Naive thymus-derived CD4-positive, alpha-beta T cell (primary cell): ENCODE measurements at regions of chr5 and their contacts with region 1.

Region 1: GRCh38 chr5:115296124-115297022 is at the start of gene CCDC112:
- DNase-seq: peak; percentile 49 to 71 (median 67)
- ATAC-seq: peak; percentile 83
- H3K4me3 ChIP-seq: peak within 1 kb of the TSS; percentile 56
- H3K4me3 Mint-ChIP-seq: peak within 1 kb of the TSS; percentile 77 to 92 (median 89)
- H3K27ac ChIP-seq: peak within 1 kb of the TSS; percentile 47
- H3K27ac Mint-ChIP-seq: peak within 1 kb of the TSS in 8 of 9 donors; percentile 29 to 80 (median 69)
- H3K4me1 ChIP-seq: peaks cover 8 to 10% of the 10 kb centered on the region in 2 donors
- H3K4me1 Mint-ChIP-seq: peaks cover 5 to 18% (median 13%) of the 10 kb centered on the region in 7 donors
- H3K27me3 ChIP-seq: no peaks in the 10 kb centered on the region
- H3K27me3 Mint-ChIP-seq: peaks cover 0 to 69% (median 3%) of the 10 kb centered on the region in 5 donors
- total RNA-seq, gene CCDC112: 0.51 to 8.5 (median 3.9) TPM

Region 2: GRCh38 chr5:113520429-113520828 is 1775.9 kb before region 1 on chr5:
- CTCF ChIA-PET with region 1: no interaction called
- POLR2A ChIA-PET with region 1: no interaction called
- intact Hi-C with region 1: loop called in 1 of 2 experiments (anchors 5 kb)
- DNase-seq: no peak
- ATAC-seq: no peak
- H3K4me3 ChIP-seq: no peak overlapping the region
- H3K4me3 Mint-ChIP-seq: peak overlapping the region in 2 of 10 donors; percentile 13 to 51
- H3K27ac ChIP-seq: no peak overlapping the region
- H3K27ac Mint-ChIP-seq: peak overlapping the region in 2 of 9 donors; percentile 24 to 56
- H3K4me1 ChIP-seq: peaks cover 7 to 15% of the 10 kb centered on the region in 2 donors
- H3K4me1 Mint-ChIP-seq: peaks cover 30 to 86% (median 73%) of the 10 kb centered on the region in 7 donors
- H3K27me3 ChIP-seq: no peaks in the 10 kb centered on the region
- H3K27me3 Mint-ChIP-seq: no peaks in the 10 kb centered on the region

Region 3: DNA sequence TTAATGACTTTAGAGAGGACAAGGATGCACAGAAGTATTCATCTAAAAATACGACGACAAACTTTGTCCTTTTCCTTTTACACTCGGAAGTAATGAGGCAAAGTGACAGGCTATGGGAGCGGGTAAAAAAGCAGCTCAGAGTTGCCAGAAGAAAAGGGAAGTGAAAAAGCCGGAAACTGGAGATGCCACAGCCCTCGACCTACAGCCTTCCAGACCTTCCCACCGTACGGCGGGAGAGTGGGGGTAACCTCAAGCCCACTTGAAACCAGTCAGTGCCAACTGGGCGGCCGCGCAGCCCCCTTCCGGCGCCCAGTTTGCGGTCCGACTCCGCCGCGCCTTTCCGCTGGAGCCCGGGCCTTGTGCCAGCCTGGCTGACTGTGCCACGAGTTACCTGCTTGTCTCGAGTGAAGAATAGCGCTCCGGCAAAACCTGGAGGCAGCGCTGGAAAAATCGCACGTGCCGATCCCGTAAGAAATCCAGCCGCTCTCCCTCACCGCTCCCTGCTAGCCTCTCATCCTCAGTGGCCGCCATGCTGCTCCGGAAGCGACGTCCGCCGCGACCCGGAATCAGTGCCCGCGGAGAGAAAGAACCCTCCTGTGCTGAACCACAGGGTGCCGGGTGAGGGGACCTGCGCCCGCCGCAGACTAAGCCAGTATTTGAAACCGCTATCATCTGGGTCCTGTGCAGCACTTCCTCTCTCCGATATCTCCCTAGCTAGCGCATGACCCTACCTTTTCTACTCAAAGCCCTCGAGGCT is 33.9 kb before region 1 on chr5 and contains the start of gene PGGT1B:
- CTCF ChIA-PET with region 1: no interaction called
- POLR2A ChIA-PET with region 1: interaction called, 26 read pairs
- intact Hi-C with region 1: loop called (anchors 1 to 2 kb)
- DNase-seq: peak; percentile 45 to 69 (median 64)
- ATAC-seq: peak; percentile 94
- H3K4me3 ChIP-seq: peak within 1 kb of the TSS; percentile 94
- H3K4me3 Mint-ChIP-seq: peak within 1 kb of the TSS; percentile 91 to 100 (median 96)
- H3K27ac ChIP-seq: peak within 1 kb of the TSS; percentile 76
- H3K27ac Mint-ChIP-seq: peak within 1 kb of the TSS; percentile 83 to 96 (median 94)
- H3K4me1 ChIP-seq: peaks cover 15 to 23% of the 10 kb centered on the region in 2 donors
- H3K4me1 Mint-ChIP-seq: peaks cover 33 to 59% (median 43%) of the 10 kb centered on the region in 7 donors
- H3K27me3 ChIP-seq: no peaks in the 10 kb centered on the region
- H3K27me3 Mint-ChIP-seq: peaks cover 0 to 4% (median 0%) of the 10 kb centered on the region in 5 donors
- total RNA-seq, gene PGGT1B: 34.5 to 49.1 (median 41.5) TPM

Region 4: GRCh38 chr5:115317736-115318135 is 21.4 kb after region 1 on chr5:
- CTCF ChIA-PET with region 1: no interaction called
- POLR2A ChIA-PET with region 1: no interaction called
- intact Hi-C with region 1: no loop called
- DNase-seq: no peak
- ATAC-seq: no peak
- H3K4me3 ChIP-seq: no peak overlapping the region
- H3K4me3 Mint-ChIP-seq: no peak overlapping the region
- H3K27ac ChIP-seq: no peak overlapping the region
- H3K27ac Mint-ChIP-seq: no peak overlapping the region
- H3K4me1 ChIP-seq: no peaks in the 10 kb centered on the region
- H3K4me1 Mint-ChIP-seq: no peaks in the 10 kb centered on the region
- H3K27me3 ChIP-seq: no peaks in the 10 kb centered on the region
- H3K27me3 Mint-ChIP-seq: peaks cover 26 to 53% (median 30%) of the 10 kb centered on the region in 5 donors

Region 5: DNA sequence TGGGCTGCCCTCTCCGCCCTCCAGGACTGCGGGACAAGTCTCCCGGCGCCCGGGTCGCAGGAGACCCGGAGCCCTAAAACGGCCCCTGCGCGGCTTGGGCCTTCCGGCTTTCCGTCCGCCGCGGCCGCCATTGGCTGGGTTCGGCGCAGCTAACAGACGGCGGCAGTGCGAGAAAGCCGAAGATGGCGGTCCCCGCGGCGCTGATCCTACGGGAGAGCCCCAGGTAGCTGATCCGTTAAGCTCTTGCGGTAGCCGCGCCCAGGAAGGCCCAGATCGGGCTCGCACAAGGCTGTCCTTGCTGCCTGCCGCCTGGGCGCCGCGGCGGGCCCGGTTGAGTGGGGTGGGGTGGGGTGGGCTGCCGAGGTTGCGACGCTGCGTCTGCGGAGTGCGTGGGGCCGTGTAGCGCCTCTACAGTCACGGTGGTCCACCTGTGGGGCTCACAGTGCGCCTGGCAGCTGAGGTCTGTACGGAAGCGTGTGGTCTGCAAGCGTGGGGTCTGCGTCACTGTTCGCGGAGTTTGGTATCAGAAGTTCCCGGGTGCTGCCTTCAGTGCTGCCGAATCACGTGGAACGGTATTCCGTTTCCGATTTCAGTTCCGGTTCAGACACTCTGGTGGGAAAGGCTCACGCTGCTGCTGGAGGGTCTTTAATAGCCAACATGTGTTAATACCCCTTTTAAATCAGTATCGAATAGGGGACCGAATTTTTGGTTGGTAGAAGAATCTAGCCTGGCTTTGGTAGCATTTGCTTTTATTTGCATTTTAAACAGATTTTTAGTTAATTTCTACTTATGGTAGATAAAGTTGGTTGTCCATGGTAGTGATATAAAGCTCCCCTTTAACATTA is 788.7 kb after region 1 on chr5 and contains the start of gene COMMD10:
- CTCF ChIA-PET with region 1: no interaction called
- POLR2A ChIA-PET with region 1: no interaction called
- intact Hi-C with region 1: loop called (anchors 1 to 5 kb)
- DNase-seq: peak; percentile 65 to 88 (median 83)
- ATAC-seq: peak; percentile 95
- H3K4me3 ChIP-seq: peak within 1 kb of the TSS; percentile 54
- H3K4me3 Mint-ChIP-seq: peak within 1 kb of the TSS; percentile 87 to 98 (median 95)
- H3K27ac ChIP-seq: peak within 1 kb of the TSS; percentile 94
- H3K27ac Mint-ChIP-seq: peak within 1 kb of the TSS; percentile 90 to 99 (median 98)
- H3K4me1 ChIP-seq: peaks cover 13 to 16% of the 10 kb centered on the region in 2 donors
- H3K4me1 Mint-ChIP-seq: peaks cover 22 to 77% (median 66%) of the 10 kb centered on the region in 7 donors
- H3K27me3 ChIP-seq: no peaks in the 10 kb centered on the region
- H3K27me3 Mint-ChIP-seq: peaks cover 0 to 3% (median 0%) of the 10 kb centered on the region in 5 donors
- total RNA-seq, gene COMMD10: 29.4 to 50.6 (median 37.8) TPM